PC-9 (cell line): ENCODE measurements at regions of chr10 and their contacts with region 1.

Region 1: DNA sequence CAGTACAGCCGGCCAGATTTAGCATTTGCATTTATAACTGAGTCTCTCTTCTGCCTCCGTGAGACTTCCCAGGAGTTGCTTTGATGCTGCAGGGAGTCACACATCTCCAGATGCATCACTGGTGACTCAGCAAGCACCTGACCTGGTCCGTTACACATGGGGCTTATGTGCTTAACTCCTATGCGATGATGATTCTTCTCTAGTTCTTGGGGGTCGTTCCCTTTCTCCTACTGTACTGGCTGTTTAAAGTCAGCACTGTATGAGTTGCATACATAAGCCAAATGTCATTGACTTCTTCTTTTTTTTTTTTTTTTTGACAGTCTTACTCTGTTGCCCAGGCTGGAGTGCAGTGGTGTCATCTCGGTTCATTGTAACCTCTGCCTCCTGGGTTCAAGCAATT is 13.0 kb upstream of the AKR1E2 start:
- DNase-seq: peak; percentile 28 to 48
- H3K4me3 ChIP-seq: no peak overlapping the region
- H3K27ac ChIP-seq: no peak overlapping the region
- H3K4me1 ChIP-seq: no peaks in the 10 kb centered on the region; the same call in 1 of the 2 replicates
- H3K27me3 ChIP-seq: no peaks in the 10 kb centered on the region
- CTCF ChIP-seq: no peak

Region 2: DNA sequence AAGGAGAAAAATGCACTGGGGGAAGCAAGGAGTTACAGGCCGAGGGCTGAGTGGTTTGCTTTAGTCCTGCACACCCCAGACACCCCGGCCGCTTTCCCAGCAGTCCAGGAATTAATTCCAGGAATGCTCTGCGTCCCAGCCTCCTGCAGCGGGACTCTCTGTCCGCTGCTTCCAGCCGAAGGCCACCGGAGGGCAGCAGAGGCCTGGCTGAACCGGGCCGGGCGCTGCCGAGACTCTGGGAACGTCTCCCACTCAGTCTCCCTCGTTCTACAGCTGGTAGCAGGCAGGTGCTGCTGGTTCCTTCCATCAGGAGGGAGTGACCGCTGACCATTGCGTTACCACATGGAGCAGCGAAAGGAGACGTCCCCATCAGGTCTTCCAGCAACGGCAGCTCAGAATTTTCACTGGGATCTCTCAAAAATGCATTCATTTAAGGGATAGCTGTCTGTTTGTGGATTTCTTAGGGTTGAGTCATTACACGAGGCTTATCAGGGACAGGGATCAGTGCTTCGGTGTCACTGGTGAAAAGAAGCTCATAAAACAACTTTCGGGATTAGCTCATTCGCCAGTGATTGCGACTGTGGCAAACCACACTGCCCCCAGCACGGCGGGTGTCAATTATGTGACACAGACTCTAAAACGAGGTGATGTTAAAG is 1615.5 kb before region 1 on chr10:
- CTCF ChIA-PET with region 1: interaction called, 14 read pairs
- POLR2A ChIA-PET with region 1: interaction called, 23 read pairs
- intact Hi-C with region 1: loop called (anchors 1 kb)
- DNase-seq: peak; percentile 85 to 86
- H3K4me3 ChIP-seq: peak overlapping the region; percentile 53; the same call in 1 of the 2 replicates
- H3K27ac ChIP-seq: peak overlapping the region; percentile 79
- H3K4me1 ChIP-seq: peaks cover 10% of the 10 kb centered on the region
- H3K27me3 ChIP-seq: no peaks in the 10 kb centered on the region
- CTCF ChIP-seq: peak; percentile 79

Region 3: DNA sequence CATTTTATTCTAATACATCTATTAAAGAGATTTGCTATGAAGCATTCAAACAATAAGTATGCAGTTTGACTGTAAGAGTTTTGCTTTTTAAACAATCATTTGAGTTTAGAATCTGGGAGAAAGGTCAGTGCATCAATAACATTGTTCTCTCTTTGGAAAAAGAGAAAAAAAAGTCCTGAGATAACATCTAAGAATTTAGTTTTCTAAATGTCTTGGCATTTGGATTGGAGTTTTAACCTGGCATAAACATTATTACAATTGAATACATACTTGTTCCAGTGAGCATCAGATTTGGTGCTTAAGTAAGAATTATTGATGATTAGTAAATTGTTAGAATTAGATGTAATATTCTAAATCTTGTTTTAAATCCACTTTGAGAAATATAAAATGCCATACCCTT is 34.3 kb before region 1 on chr10:
- CTCF ChIA-PET with region 1: no interaction called
- POLR2A ChIA-PET with region 1: no interaction called
- intact Hi-C with region 1: no loop called
- DNase-seq: no peak
- H3K4me3 ChIP-seq: no peak overlapping the region
- H3K27ac ChIP-seq: no peak overlapping the region
- H3K4me1 ChIP-seq: no peaks in the 10 kb centered on the region
- H3K27me3 ChIP-seq: no peaks in the 10 kb centered on the region
- CTCF ChIP-seq: no peak

Region 4: DNA sequence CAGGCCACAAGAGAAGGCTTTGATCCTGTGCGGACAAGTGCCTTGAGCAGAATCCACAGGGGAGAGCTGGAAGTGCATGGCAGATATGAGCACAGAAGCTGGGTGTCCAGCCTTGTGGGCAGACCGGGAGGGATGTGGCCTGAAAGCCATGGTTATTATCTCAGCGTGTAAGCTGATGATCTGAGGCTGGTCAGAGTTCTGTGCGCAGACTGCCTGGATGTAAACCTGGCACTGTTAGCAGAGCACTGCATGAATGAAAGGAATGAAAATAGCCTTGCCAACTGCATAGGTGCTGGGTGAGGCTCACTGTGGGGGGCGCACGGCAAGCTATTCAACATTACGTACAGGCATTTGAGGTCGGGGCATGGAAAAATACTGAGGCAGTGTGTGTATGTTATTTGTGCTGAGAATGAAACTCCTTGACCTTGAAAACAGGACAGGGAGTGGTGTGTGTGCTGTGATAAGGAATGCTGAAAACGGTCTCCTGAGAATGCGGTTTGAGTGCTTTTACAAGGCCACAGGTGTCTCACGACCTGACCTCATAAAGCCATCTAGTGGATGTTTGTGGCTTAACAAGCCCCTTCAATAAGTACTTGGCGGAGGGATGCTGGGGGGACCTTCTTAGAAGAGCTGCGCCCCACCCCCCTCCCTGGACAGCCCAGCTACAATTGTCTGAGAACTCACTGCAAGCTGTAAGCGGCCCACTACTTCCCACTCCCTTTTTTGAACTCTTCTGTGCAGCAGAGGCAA is 168.9 kb after region 1 on chr10:
- CTCF ChIA-PET with region 1: interaction called, 12 read pairs
- POLR2A ChIA-PET with region 1: no interaction called
- intact Hi-C with region 1: no loop called
- DNase-seq: peak; percentile 75 to 84
- H3K4me3 ChIP-seq: no peak overlapping the region
- H3K27ac ChIP-seq: peak overlapping the region; percentile 61
- H3K4me1 ChIP-seq: peaks cover 6% of the 10 kb centered on the region; the same call in 1 of the 2 replicates
- H3K27me3 ChIP-seq: no peaks in the 10 kb centered on the region
- CTCF ChIP-seq: peak; percentile 51

Region 5: DNA sequence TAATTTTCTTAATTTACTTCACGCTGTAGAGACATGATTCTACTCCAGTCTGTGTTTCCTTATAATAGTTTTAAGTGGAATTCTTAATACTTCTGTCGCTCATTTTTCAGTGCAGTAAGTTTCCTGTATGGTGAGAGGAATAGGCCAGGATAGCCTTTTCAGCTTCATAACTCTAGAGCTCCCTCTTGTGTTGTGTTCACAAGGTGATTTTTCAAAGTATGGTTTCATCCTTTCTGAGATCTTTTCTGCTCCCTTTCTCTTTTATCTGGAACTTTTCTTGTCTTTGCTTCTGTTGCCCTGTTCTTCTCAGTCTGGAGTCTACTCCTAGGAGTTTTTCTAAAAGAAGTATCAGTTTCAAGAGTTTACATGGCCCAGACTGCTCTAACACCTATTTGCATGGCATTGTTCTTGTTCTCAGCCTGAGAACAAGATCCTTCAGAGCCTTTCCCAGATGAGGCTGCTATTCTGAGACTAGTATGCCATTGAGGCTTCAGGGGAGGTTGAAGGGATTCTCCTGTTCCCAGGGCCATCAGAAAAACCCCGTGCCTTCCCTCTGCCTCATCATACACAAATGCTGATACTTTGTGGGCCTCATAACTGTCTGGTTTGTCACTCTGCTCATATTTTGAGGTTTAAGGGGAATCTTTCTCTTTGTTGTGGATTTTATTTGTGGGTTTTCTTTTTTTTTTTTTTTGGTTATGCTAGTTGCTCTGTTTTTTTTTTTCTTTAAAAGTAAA is 621.2 kb after region 1 on chr10:
- CTCF ChIA-PET with region 1: interaction called, 4 read pairs
- POLR2A ChIA-PET with region 1: interaction called, 3 read pairs
- intact Hi-C with region 1: loop called (anchors 2 kb)
- DNase-seq: peak in 1 of 2 experiments; percentile 14
- H3K4me3 ChIP-seq: no peak overlapping the region
- H3K27ac ChIP-seq: peak overlapping the region; percentile 43
- H3K4me1 ChIP-seq: peaks cover 10% of the 10 kb centered on the region; the same call in 1 of the 2 replicates
- H3K27me3 ChIP-seq: no peaks in the 10 kb centered on the region
- CTCF ChIP-seq: peak; percentile 76

Region 6: DNA sequence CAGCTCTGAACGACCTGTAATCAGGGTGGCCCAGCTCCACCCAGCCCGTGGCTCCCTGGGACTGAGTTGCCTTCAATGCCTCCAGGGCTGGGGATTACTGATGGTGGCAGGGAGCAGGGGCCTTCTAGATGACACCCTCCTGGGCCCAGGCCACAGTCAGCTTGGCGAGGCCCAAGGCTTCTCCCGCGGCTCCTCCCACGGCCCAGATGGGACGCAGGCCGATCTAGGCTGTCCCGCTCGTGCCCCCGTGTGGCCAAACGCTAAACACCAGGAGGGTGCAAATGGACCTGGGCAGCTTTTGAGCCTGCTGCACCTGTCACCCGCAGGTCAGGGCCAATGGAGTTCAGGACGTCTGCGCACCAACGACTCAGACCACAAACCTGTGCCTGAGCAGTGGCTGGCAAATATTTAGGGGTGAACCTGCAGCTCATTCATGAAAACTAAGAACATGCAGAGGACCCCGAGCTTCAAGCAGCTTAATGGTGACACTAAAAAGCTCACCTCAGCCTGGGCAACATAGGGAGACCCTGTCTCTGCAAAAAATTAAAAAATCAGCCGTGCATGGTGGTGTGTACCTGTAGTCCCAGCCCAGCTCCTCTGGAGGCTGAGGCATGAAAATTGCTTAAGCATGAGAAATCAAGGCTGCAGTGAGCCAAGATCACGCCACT is 810.2 kb after region 1 on chr10:
- CTCF ChIA-PET with region 1: interaction called, 6 read pairs
- POLR2A ChIA-PET with region 1: no interaction called
- intact Hi-C with region 1: loop called (anchors 2 kb)
- DNase-seq: peak; percentile 83 to 93
- H3K4me3 ChIP-seq: no peak overlapping the region
- H3K27ac ChIP-seq: peak overlapping the region; percentile 77
- H3K4me1 ChIP-seq: peaks cover 20% of the 10 kb centered on the region
- H3K27me3 ChIP-seq: no peaks in the 10 kb centered on the region
- CTCF ChIP-seq: peak; percentile 84

Region 7: DNA sequence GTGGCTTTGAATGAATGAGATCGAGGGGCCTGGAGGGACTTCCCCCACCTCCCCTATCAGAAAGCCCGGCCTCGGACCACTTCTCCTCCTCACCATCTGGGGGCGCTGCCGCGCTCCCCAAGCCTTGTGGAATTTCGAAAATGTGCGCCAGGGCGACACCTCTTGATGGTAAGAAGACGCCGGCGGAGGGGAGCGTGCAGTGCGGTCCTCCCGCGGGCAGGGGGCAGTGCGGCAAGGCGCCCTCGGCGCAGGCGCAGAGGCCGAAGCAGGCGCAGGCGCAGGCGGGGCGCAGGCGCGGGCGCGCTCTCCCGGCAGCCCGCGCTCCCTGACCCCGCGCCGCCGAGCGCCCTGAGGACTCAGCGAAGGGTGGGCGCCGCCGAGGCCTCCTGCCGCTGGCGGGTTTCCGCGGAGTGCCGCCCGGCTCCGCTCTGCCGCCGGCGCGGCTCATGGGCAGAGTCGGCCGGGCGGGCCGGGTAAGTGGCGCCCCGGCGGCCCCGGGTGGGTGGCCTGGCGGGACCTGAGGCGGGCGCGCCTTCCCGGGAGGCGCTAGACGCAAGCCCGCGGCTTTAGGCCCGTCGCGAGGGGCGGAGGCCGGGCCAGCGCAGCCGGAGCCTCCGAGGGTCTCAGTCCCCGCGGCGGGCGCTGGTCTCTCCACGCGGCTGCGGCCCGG is 1275.8 kb after region 1 on chr10 and contains the start of gene RBM17:
- CTCF ChIA-PET with region 1: no interaction called
- POLR2A ChIA-PET with region 1: no interaction called
- intact Hi-C with region 1: loop called (anchors 10 kb)
- DNase-seq: peak; percentile 69 to 97
- H3K4me3 ChIP-seq: peak within 1 kb of the TSS; percentile 71
- H3K27ac ChIP-seq: 0 out of 2 replicates have a peak within 1 kb of the TSS, but pooled peaks have one; percentile 19
- H3K4me1 ChIP-seq: peaks cover 16% of the 10 kb centered on the region
- H3K27me3 ChIP-seq: peaks cover 3% of the 10 kb centered on the region; the same call in 1 of the 2 replicates
- CTCF ChIP-seq: peak; percentile 97
- total RNA-seq, gene RBM17: 98.2 and 131 TPM in 2 replicates